ENCODE measurements at regions of chr11 and their contacts with region 1.

Region 1: GRCh38 chr11:8566613-8567210 is 27.3 kb downstream of the STK33 start:
- DNase-seq: peak; percentile 72
- ATAC-seq: peak; percentile 43
- H3K4me3 ChIP-seq: no peak overlapping the region
- H3K4me3 Mint-ChIP-seq: no peak overlapping the region
- H3K27ac ChIP-seq: no peak overlapping the region
- H3K27ac Mint-ChIP-seq: no peak overlapping the region
- H3K4me1 ChIP-seq: no peaks in the 10 kb centered on the region
- H3K4me1 Mint-ChIP-seq: no peaks in the 10 kb centered on the region
- H3K27me3 ChIP-seq: no peaks in the 10 kb centered on the region
- H3K27me3 Mint-ChIP-seq: no peaks in the 10 kb centered on the region
- CTCF ChIP-seq: peak; percentile 93

Region 2: GRCh38 chr11:8033305-8034105 is 533.2 kb before region 1 on chr11:
- CTCF ChIA-PET with region 1: interaction called, 10 read pairs
- POLR2A ChIA-PET with region 1: no interaction called
- intact Hi-C with region 1: no loop called
- DNase-seq: peak; percentile 69
- ATAC-seq: peak; percentile 83
- H3K4me3 ChIP-seq: no peak overlapping the region
- H3K4me3 Mint-ChIP-seq: no peak overlapping the region
- H3K27ac ChIP-seq: no peak overlapping the region
- H3K27ac Mint-ChIP-seq: no peak overlapping the region
- H3K4me1 ChIP-seq: peaks cover 0 to 8% of the 10 kb centered on the region in 2 donors
- H3K4me1 Mint-ChIP-seq: peaks cover 6% of the 10 kb centered on the region
- H3K27me3 ChIP-seq: peaks cover 0 to 31% (median 9%) of the 10 kb centered on the region in 4 experiments
- H3K27me3 Mint-ChIP-seq: peaks cover 45% of the 10 kb centered on the region
- CTCF ChIP-seq: peak; percentile 86

Region 3: GRCh38 chr11:8225589-8226036 is 341.1 kb before region 1 on chr11:
- CTCF ChIA-PET with region 1: interaction called, 82 read pairs
- POLR2A ChIA-PET with region 1: no interaction called
- intact Hi-C with region 1: no loop called
- DNase-seq: peak; percentile 80
- ATAC-seq: peak; percentile 66
- H3K4me3 ChIP-seq: no peak overlapping the region
- H3K4me3 Mint-ChIP-seq: no peak overlapping the region
- H3K27ac ChIP-seq: no peak overlapping the region
- H3K27ac Mint-ChIP-seq: no peak overlapping the region
- H3K4me1 ChIP-seq: peaks cover 0 to 6% of the 10 kb centered on the region in 2 donors
- H3K4me1 Mint-ChIP-seq: peaks cover 2% of the 10 kb centered on the region
- H3K27me3 ChIP-seq: no peaks in the 10 kb centered on the region
- H3K27me3 Mint-ChIP-seq: no peaks in the 10 kb centered on the region
- CTCF ChIP-seq: peak; percentile 93

Region 4: DNA sequence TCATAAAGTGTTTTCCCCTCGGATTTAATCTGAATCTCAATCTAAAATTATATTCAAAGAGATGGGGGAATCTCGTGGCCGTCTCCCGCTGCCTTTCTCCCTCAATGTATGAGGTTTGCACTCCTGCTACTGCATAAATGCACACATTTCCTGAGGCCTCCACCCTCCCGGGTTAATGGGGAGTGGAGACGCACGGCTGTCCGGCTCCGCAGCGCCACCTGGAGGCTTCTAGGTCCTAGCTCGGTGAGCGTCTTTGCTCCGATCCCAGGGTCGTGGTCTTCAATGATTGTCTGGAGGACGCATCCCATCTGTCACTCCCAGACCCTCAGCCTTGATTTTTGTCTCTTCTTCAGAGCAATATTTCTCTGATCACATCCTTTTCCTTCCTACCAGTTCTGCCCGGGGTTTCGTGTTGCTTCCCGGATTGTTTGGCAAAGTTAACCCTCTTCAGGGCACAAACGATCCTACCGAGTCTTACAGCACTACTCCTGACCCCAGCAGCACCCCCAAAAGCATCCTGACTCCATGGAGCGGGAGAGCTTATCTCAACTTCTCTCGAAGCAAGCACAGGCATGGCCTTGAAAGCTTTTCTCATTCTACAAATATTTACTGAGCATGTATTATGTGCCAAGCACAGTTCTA is 302.8 kb before region 1 on chr11 and contains the start of gene LMO1:
- CTCF ChIA-PET with region 1: interaction called, 25 read pairs
- POLR2A ChIA-PET with region 1: no interaction called
- intact Hi-C with region 1: no loop called
- DNase-seq: peak; percentile 83
- ATAC-seq: peak; percentile 80
- H3K4me3 ChIP-seq: peak within 1 kb of the TSS; percentile 32 to 55 (median 51)
- H3K4me3 Mint-ChIP-seq: peak within 1 kb of the TSS; percentile 82
- H3K27ac ChIP-seq: no peak within 1 kb of the TSS
- H3K27ac Mint-ChIP-seq: no peak within 1 kb of the TSS
- H3K4me1 ChIP-seq: peaks cover 21 to 27% of the 10 kb centered on the region in 2 donors
- H3K4me1 Mint-ChIP-seq: peaks cover 17% of the 10 kb centered on the region
- H3K27me3 ChIP-seq: peaks cover 0 to 72% (median 33%) of the 10 kb centered on the region in 4 experiments
- H3K27me3 Mint-ChIP-seq: peaks cover 60% of the 10 kb centered on the region
- CTCF ChIP-seq: peak; percentile 85
- total RNA-seq, gene LMO1: not detected in 2 replicates

Region 5: DNA sequence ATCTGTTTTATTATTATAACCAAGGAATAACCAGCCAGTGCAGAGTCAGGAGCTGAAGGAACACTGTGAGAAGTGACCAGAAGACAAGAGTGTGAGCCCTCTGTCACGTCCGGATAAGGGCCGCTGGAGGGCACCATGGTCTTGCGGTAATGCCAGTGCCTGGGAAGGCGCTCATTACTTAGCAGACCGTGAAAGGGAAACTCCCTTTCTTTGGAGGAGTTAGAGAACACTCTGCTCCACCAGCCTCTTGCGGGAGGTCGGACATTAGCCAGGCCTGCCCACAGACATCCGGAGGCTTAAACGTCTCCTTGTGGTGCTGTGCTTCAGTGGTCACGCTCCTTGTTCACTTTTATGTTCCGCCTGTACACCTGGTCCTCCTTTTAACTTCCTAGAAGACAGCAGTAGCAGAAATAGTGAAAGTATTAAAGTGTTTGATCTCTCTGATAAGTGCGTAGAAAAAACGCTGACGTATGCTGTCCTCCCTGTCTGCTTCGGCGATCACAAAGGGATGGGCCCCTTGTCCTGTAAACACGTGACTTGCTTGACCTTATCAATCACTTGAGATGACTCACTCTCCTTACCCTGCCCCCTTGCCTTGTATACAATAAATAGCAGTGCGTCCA is 182.4 kb before region 1 on chr11:
- CTCF ChIA-PET with region 1: interaction called, 3 read pairs
- POLR2A ChIA-PET with region 1: no interaction called
- intact Hi-C with region 1: loop called (anchors 1 kb)
- DNase-seq: peak; percentile 57
- ATAC-seq: peak; percentile 66
- H3K4me3 ChIP-seq: peak overlapping the region in 1 of 5 experiments; percentile 6
- H3K4me3 Mint-ChIP-seq: peak overlapping the region; percentile 69
- H3K27ac ChIP-seq: no peak overlapping the region
- H3K27ac Mint-ChIP-seq: peak overlapping the region; percentile 26
- H3K4me1 ChIP-seq: peaks cover 0 to 3% of the 10 kb centered on the region in 2 donors
- H3K4me1 Mint-ChIP-seq: peaks cover 11% of the 10 kb centered on the region
- H3K27me3 ChIP-seq: no peaks in the 10 kb centered on the region
- H3K27me3 Mint-ChIP-seq: no peaks in the 10 kb centered on the region
- CTCF ChIP-seq: no peak

Region 6: DNA sequence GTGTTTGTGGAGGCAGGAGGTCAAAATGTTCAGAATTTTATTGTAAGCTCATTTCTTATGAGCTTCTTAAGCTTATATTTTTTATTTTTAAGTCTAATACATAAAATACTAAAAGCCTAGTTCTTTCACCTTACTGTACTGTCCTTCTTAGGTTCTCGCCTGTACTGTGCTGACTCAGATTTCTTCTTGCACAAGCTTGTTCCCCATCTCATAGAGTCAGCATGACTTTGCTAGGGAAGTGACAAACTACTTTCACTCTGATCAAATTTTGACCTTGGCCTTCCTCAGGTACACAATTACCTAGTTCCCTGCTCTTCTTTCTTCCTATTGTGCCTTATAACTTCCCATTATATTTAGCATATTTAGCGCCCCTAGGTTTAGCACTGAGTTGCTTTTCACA is 54.2 kb before region 1 on chr11:
- CTCF ChIA-PET with region 1: no interaction called
- POLR2A ChIA-PET with region 1: no interaction called
- intact Hi-C with region 1: no loop called
- DNase-seq: no peak
- ATAC-seq: no peak
- H3K4me3 ChIP-seq: no peak overlapping the region
- H3K4me3 Mint-ChIP-seq: no peak overlapping the region
- H3K27ac ChIP-seq: no peak overlapping the region
- H3K27ac Mint-ChIP-seq: no peak overlapping the region
- H3K4me1 ChIP-seq: no peaks in the 10 kb centered on the region
- H3K4me1 Mint-ChIP-seq: no peaks in the 10 kb centered on the region
- H3K27me3 ChIP-seq: no peaks in the 10 kb centered on the region
- H3K27me3 Mint-ChIP-seq: peaks cover 3% of the 10 kb centered on the region
- CTCF ChIP-seq: no peak

Region 7: DNA sequence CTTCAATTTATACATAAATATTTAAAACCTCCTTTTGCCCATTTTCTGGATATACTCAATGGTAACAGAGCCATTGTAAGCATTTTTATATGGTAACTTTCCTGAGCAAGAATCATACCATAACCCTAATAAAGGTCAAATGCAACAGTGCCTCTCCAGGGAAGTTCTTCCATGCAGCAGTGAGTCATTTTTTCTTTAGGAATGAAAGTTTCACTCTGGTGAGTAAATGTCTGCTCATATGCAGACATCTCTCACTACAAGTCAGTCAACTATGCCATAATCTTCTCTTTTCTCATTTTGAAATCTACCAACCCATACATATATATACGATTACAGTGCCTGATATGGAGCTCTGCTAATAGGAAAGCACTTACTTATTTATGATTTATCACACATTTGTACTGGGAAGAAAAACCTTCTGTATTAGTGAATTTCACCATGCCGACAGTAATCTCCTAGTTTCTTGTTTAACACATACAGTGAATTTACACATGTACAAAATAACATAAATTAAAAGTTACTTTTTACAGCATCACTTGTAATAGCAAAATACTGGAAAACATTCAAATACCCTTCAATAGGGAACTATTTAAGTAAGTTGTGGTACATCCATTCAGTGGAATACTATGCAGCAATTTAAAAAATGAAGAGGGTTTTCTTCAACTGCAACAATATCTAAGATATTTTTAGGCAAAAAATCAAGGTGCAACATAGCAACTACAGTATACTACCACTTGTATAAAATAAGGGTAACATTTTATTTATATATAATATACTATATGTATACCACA is 11.3 kb after region 1 on chr11:
- CTCF ChIA-PET with region 1: interaction called, 17 read pairs
- POLR2A ChIA-PET with region 1: no interaction called
- intact Hi-C with region 1: no loop called
- DNase-seq: no peak
- ATAC-seq: no peak
- H3K4me3 ChIP-seq: no peak overlapping the region
- H3K4me3 Mint-ChIP-seq: no peak overlapping the region
- H3K27ac ChIP-seq: no peak overlapping the region
- H3K27ac Mint-ChIP-seq: no peak overlapping the region
- H3K4me1 ChIP-seq: no peaks in the 10 kb centered on the region
- H3K4me1 Mint-ChIP-seq: peaks cover 4% of the 10 kb centered on the region
- H3K27me3 ChIP-seq: no peaks in the 10 kb centered on the region
- H3K27me3 Mint-ChIP-seq: no peaks in the 10 kb centered on the region
- CTCF ChIP-seq: no peak

Measured in B cell (primary cell).